Posterior vena cava (tissue), 2 donors: ENCODE measurements at regions of chr18 and their contacts with region 1.

Region 1: DNA sequence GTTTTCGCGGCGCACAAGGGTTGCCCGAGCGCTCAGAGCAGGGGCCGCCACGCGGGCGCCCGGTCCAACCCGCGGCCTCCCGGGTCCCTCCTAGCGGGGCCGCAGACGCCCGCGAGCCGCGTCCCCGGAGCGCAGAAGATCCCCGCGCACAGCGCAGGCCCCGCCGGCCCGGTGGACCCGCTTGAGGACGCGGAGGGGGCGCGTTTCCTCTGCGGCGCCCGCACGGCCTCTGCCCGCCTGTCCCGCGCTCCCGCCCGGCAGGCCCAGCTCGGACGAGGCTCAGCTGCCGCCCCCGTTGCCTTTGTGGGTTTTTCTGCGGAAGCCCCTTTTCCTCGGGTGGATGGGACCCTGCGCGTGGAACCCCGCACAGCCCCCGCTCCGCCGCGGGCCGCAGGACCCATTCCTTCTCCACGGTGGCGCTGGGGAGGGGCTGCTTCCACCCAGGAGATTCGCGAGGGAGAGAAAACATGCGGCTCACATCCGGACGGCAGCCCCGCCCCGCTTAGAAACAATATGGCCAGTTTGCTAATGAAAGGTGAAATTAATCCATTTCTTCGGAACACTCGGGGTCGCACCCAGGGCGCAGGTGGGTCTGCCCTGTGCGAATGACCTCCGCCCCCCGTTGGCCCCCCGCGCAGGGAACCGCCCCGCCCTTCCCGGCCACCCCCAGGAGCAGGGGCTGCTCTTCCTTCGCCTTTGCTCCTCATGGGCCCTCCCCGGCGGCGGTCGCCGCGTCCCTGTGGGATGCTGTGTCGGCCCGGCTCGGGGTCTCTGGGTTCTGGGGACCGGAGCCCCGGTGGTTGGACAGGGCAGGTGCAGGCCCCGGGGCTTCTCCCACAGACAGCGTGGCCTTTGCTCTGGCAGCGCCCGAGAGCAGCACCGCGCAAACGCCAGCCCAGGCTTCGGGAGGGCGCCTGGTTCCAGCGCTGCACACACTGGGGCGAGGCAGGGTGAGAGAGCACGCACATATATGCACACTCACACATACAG is 9.3 kb upstream of the KCNG2 start:
- DNase-seq: peak; percentile 80

Region 2: DNA sequence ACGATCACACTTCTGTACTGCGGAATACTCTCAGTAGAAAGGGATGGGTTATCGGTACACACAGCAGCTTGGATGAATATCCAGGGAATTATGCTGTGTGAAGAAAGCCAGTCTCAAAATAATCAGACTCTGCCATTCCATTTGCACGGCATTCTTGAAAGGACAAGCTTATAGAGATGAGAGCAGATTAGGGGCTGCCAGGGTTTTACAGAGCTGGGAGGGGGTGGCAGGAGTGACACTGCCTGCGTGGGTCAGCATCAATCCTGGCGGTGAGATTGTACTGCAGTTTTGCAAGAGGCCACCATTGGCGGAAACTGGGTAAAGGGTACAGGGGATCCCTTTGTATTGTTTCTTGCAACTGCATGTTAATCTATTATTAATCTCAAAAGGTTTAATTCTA is 26.0 kb after region 1 on chr18:
- intact Hi-C with region 1: loop called in 1 of 2 experiments (anchors 1 kb)
- DNase-seq: no peak